Dorsolateral prefrontal cortex (tissue), 120 donors: ENCODE measurements at regions of chr1 and their contacts with region 1.

Region 1: DNA sequence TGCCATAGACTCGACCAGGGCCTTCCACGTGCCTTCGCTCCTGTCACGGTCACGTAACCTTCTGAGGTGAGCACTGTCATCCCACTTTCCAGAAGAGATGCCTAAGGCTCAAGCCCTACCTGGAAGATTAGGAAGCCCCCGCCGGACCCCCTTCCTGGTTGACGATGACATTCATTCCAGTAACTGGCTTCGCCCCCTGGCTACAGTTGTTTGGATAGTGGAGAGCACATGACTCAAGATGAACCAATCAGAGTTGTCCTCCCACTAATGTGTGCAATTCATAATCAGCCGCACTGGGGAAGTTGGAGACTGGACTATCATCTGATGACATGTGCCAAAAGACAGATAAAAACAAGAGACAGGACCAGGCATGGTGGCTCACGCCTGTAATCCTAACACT is 104.0 kb upstream of the GJB5 start:
- DNase-seq: no peak
- H3K4me3 ChIP-seq: no peak overlapping the region
- H3K27ac ChIP-seq: no peak overlapping the region
- H3K27me3 ChIP-seq: peaks cover 0 to 57% (median 15%) of the 10 kb centered on the region in 45 donors
- CTCF ChIP-seq: no peak

Region 2: DNA sequence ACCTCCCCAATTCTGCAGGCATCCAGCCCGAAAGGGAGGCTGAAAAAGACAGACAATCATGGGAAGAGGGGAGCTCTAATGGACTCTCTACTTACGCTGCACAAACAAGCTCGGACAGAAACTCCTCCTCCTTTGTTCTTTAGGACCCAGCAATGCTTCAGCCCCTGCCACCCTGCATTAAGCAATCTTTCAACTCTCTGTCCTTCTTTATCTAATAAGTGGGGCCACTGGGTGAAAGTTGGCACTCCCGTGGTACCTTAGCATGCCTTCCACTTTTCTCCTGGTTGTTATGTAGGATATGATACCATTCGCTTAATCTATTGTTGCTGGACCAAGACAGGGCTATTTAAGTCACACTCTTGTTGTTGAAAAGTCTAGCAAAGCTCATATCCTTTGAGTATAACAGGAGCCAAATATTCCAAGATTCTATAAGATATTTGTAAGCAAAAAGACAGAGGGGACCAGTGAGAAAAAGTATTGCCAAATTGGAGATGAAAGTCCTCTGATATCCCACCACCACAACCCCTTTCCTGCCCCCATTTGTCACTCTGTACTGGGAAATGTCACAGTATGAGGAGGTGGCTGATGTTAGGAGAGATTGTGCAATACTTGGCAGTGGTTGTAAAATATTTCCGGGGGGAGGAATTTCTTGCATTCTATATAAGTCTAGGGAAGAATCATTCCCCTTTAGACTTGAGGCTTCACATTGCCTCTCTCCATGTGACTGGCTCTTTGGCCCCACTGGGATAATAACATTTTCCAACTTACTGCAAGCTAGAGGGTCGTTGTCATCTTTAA is 33.3 kb before region 1 on chr1:
- intact Hi-C with region 1: loop called in 1 of 2 experiments (anchors 1 kb)
- DNase-seq: no peak
- H3K4me3 ChIP-seq: no peak overlapping the region
- H3K27ac ChIP-seq: no peak overlapping the region
- H3K27me3 ChIP-seq: peaks cover 0 to 33% (median 7%) of the 10 kb centered on the region in 45 donors
- CTCF ChIP-seq: no peak